ENCODE measurements at regions of chr15 and their contacts with region 1.

Region 1: GRCh38 chr15:88638626-88639372 is at the start of gene ISG20:
- DNase-seq: peak; percentile 98
- H3K4me3 Mint-ChIP-seq: peak within 1 kb of the TSS; percentile 89
- H3K27ac Mint-ChIP-seq: peak within 1 kb of the TSS; percentile 96
- H3K4me1 Mint-ChIP-seq: peaks cover 64% of the 10 kb centered on the region
- H3K27me3 Mint-ChIP-seq: no peaks in the 10 kb centered on the region
- total RNA-seq, gene ISG20: 33.9 and 35.5 TPM in 2 replicates

Region 2: DNA sequence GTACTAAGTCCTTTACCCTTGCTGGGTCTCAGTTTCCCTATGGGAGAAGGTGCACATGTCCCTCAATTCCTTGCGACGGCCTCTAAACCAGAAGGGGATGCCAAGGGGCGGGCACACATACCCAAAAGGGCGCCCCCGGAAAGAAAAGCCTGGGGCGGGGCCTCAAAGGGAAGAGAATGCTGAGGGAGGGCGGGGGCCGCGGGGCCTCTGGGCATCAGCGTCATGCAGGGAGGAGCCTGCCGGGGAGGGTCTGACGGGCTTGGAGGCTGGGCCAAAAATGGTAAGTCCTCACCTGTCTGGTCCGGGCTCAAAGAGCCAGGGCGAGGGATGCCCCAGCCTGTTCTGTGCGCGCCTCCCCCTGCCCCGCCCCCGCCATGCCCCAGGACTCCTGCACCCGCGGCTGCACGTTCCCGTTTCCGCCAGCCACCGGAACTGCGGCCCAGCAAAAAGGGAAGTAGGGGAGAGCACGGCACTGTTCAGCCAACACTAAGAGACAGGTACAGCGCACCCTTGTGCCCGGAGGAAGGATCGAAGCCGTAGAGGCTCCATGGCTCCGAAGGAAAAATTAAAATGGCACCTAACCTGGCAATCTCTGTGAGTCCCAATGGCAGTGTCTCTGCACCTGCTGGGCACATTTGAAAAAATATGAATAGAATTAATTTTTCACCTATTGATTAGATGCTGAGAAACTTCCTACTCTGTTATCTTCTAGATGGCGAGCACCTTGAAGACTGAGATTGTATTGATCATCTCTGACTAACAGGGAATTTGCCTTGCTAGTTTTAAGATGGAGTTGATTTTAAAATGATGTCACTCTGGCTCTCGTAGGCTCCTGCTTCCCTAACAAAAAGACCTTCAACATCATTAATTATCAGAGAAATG is 92.3 kb before region 1 on chr15 and contains the start of gene DET1:
- intact Hi-C with region 1: loop called (anchors 1 kb)
- DNase-seq: peak; percentile 97
- H3K4me3 Mint-ChIP-seq: peak within 1 kb of the TSS; percentile 92
- H3K27ac Mint-ChIP-seq: peak within 1 kb of the TSS; percentile 91
- H3K4me1 Mint-ChIP-seq: peaks cover 12% of the 10 kb centered on the region
- H3K27me3 Mint-ChIP-seq: no peaks in the 10 kb centered on the region
- total RNA-seq, gene DET1: 2.1 and 2.8 TPM in 2 replicates

Region 3: DNA sequence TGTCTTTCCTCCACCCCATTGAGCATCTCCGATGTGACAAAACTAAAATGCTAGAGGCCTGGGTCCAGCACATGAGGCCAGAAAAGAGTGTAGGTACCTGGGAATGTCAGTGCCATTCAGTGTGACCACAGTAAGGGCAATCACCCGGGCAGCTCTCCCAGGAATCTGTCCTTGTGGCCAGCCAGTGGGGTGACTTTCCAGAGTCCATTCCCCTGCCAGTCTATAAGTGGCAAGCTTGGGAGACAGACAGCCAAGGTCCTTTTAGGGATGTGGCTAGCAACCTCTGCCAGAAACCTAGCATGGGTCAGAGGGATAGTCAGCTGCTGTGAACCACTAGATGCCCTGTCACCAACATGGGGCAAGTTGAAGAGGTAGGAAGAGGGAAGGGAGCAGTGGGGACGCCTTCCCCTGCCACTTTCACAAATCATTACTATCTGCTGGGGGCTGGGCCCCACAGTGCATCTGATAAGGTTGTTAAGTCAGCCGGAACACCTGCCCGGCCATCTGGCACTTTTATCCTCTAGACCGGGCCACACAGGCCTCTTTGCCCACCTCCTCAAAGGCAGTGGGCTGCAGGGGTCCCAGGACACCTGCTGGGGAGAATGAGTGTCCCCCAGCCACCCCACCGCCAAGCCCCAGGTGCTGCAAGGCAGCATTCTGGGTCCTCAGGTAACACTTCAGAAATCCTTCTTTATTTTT is 67.5 kb before region 1 on chr15:
- intact Hi-C with region 1: no loop called
- DNase-seq: no peak
- H3K4me3 Mint-ChIP-seq: no peak overlapping the region
- H3K27ac Mint-ChIP-seq: no peak overlapping the region
- H3K4me1 Mint-ChIP-seq: no peaks in the 10 kb centered on the region
- H3K27me3 Mint-ChIP-seq: peaks cover 4% of the 10 kb centered on the region

Region 4: DNA sequence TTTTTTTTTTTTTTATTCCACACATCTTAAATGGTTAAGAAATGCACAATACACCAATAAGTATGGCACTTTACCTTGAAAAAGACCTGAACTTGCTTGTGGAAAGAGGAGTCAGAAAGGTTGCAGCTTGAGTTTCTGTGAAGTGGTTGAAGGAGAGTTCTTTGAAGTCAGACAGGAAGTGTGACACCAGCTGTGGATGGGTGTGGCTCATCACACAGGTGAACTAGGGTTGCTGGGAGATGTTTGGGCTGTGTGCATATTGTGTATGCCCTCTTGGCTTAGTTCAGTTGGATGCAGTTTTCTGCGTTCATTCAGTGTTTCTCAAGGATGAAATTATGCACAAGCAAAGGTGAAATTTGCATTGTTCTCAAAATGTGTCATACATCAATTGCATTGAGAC is 11.3 kb before region 1 on chr15:
- intact Hi-C with region 1: loop called (anchors 1 kb)
- DNase-seq: peak; percentile 93
- H3K4me3 Mint-ChIP-seq: peak overlapping the region; percentile 74
- H3K27ac Mint-ChIP-seq: peak overlapping the region; percentile 90
- H3K4me1 Mint-ChIP-seq: peaks cover 78% of the 10 kb centered on the region
- H3K27me3 Mint-ChIP-seq: no peaks in the 10 kb centered on the region

Region 5: GRCh38 chr15:88897456-88898194 is 258.8 kb after region 1 on chr15:
- intact Hi-C with region 1: no loop called
- DNase-seq: peak; percentile 95
- H3K4me3 Mint-ChIP-seq: no peak overlapping the region
- H3K27ac Mint-ChIP-seq: no peak overlapping the region
- H3K4me1 Mint-ChIP-seq: peaks cover 31% of the 10 kb centered on the region
- H3K27me3 Mint-ChIP-seq: no peaks in the 10 kb centered on the region

Measured in activated CD4-positive, alpha-beta T cell treated with anti-CD3 and anti-CD28 coated beads, Interleukin-2, amount 10 ng/mL, durations not matched to agents 24 days and 14 days (primary cell).